B cell (primary cell): ENCODE measurements at regions of chrX and their contacts with region 1.

Region 1: DNA sequence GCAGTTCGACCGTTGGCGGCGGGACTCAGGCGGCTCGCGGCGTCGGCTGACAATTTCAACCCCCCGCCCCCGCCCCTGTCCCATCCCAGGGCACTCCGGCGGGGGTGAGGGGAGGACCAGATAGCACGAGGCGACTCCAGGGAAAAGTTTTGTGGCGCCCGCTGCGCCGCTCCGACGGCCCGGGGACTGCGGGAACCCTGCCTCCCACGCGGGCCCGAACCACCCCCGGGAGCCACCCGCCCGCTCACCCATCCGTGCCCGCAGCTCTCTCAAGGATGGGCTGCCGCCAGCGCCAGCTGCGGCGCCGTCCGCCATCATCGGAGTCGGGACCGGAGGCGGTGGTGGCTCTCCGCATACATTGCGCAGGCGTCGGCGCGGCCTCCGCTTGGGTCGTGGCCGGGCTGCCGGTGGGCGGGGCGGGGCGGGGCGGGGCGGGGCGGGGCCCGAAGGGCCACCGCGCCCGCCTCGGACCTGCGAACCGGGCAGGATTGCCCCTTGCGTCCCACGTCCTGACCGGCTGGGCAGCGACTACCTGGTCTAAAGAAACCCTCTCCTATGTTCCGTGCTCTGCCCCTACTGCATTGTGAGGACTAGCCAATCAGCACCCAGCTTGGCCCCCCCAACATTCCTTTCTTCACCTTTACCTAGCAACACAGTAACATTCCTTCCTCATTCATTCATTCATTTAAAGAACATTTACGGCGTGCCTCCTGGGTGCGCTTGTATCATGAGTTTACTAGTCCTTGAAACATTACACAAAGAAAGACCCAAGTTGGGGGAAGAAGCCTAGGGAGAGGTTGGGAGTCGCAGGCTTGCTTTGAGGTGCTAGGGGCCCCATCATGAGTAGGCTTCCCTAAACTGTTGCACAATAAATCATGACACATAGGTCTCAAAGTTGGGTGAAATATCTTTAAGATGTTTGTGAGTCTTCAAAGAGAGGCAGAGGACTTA is at the start of gene MAP7D3:
- DNase-seq: peak; percentile 81
- ATAC-seq: peak; percentile 90
- H3K4me3 ChIP-seq: peak within 1 kb of the TSS; percentile 38 to 75 (median 67)
- H3K4me3 Mint-ChIP-seq: peak within 1 kb of the TSS; percentile 88
- H3K27ac ChIP-seq: peak within 1 kb of the TSS; percentile 47 to 70
- H3K27ac Mint-ChIP-seq: peak within 1 kb of the TSS; percentile 89
- H3K4me1 ChIP-seq: peaks cover 5 to 11% of the 10 kb centered on the region in 2 donors
- H3K4me1 Mint-ChIP-seq: peaks cover 13% of the 10 kb centered on the region
- H3K27me3 ChIP-seq: no peaks in the 10 kb centered on the region
- H3K27me3 Mint-ChIP-seq: no peaks in the 10 kb centered on the region
- CTCF ChIP-seq: no peak
- total RNA-seq, gene MAP7D3: 11.5 and 13.0 TPM in 2 replicates

Region 2: DNA sequence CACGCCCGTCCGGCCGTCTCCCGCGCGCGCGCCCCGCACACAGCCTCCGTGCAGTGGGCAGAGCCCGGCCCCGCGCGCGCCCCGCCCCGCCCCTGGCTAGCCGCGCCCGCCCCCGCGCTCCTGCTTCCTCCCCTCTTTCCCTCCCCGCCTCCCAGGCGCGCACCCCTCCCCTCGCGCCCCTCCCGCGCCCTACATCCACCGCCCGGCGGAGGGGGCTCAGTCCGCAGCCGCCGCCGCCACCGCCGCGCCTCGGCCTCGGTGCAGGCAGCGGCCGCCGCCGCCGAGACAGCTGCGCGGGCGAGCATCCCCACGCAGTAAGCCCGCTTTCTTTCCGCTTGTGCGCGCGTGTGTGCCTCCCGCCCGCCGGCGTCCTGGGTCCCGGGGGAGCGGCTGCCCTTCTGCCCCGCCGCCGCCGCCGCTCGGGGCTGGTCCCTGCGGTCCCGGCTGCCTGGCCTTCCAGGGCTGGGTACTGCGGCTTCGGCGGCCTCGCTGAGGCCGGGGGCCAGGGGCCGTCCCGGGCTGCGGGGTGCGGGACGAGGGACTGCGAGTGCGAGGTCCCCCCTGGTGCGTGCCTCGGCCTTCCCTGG is 103.9 kb before region 1 on chrX and contains the start of gene FHL1:
- CTCF ChIA-PET with region 1: no interaction called
- POLR2A ChIA-PET with region 1: no interaction called
- intact Hi-C with region 1: loop called (anchors 5 kb)
- DNase-seq: peak; percentile 52
- ATAC-seq: peak; percentile 83
- H3K4me3 ChIP-seq: peak within 1 kb of the TSS; percentile 16 to 66 (median 56)
- H3K4me3 Mint-ChIP-seq: peak within 1 kb of the TSS; percentile 85
- H3K27ac ChIP-seq: no peak within 1 kb of the TSS
- H3K27ac Mint-ChIP-seq: peak within 1 kb of the TSS; percentile 59
- H3K4me1 ChIP-seq: peaks cover 17 to 18% of the 10 kb centered on the region in 2 donors
- H3K4me1 Mint-ChIP-seq: peaks cover 26% of the 10 kb centered on the region
- H3K27me3 ChIP-seq: peaks cover 0 to 6% (median 0%) of the 10 kb centered on the region in 4 experiments
- H3K27me3 Mint-ChIP-seq: no peaks in the 10 kb centered on the region
- CTCF ChIP-seq: no peak
- total RNA-seq, gene FHL1: 5.6 and 8.0 TPM in 2 replicates

Region 3: GRCh38 chrX:136209016-136209738 is 42.1 kb before region 1 on chrX:
- CTCF ChIA-PET with region 1: no interaction called
- POLR2A ChIA-PET with region 1: no interaction called
- intact Hi-C with region 1: no loop called
- DNase-seq: peak; percentile 40
- ATAC-seq: peak; percentile 16
- H3K4me3 ChIP-seq: no peak overlapping the region
- H3K4me3 Mint-ChIP-seq: peak overlapping the region; percentile 34
- H3K27ac ChIP-seq: no peak overlapping the region
- H3K27ac Mint-ChIP-seq: no peak overlapping the region
- H3K4me1 ChIP-seq: peaks cover 35 to 48% of the 10 kb centered on the region in 2 donors
- H3K4me1 Mint-ChIP-seq: peaks cover 43% of the 10 kb centered on the region
- H3K27me3 ChIP-seq: no peaks in the 10 kb centered on the region
- H3K27me3 Mint-ChIP-seq: no peaks in the 10 kb centered on the region
- CTCF ChIP-seq: no peak

Region 4: GRCh38 chrX:136227948-136228838 is 23.1 kb before region 1 on chrX:
- CTCF ChIA-PET with region 1: no interaction called
- POLR2A ChIA-PET with region 1: no interaction called
- intact Hi-C with region 1: loop called (anchors 2 kb)
- DNase-seq: peak; percentile 29
- ATAC-seq: peak; percentile 41
- H3K4me3 ChIP-seq: peak overlapping the region in 4 of 5 experiments; percentile 3 to 42 (median 21)
- H3K4me3 Mint-ChIP-seq: peak overlapping the region; percentile 67
- H3K27ac ChIP-seq: peak overlapping the region; percentile 62 to 65
- H3K27ac Mint-ChIP-seq: peak overlapping the region; percentile 89
- H3K4me1 ChIP-seq: peaks cover 14 to 16% of the 10 kb centered on the region in 2 donors
- H3K4me1 Mint-ChIP-seq: peaks cover 36% of the 10 kb centered on the region
- H3K27me3 ChIP-seq: no peaks in the 10 kb centered on the region
- H3K27me3 Mint-ChIP-seq: no peaks in the 10 kb centered on the region
- CTCF ChIP-seq: no peak

Region 5: DNA sequence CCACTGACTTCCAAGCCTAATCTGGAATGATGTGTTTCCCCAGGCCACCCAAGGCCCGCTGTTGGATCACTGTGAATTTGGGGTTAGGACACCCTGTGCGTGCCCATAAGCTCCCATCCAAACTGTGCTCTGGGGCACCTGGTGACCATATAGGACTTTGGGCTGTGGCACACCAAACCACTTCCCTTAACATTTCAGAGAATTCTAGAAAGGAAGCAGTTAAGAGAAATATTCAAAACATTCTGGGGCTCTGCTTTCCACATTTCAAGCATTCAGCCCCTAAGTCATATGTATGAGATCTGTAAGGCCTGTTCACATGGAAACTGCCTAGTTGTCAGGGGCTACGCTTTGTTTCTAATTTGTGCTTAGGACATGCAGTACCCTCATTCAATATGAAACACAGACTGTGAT is 295.1 kb after region 1 on chrX:
- CTCF ChIA-PET with region 1: no interaction called
- POLR2A ChIA-PET with region 1: no interaction called
- intact Hi-C with region 1: no loop called
- DNase-seq: no peak
- ATAC-seq: no peak
- H3K4me3 ChIP-seq: no peak overlapping the region
- H3K4me3 Mint-ChIP-seq: no peak overlapping the region
- H3K27ac ChIP-seq: no peak overlapping the region
- H3K27ac Mint-ChIP-seq: no peak overlapping the region
- H3K4me1 ChIP-seq: no peaks in the 10 kb centered on the region
- H3K4me1 Mint-ChIP-seq: no peaks in the 10 kb centered on the region
- H3K27me3 ChIP-seq: no peaks in the 10 kb centered on the region
- H3K27me3 Mint-ChIP-seq: no peaks in the 10 kb centered on the region
- CTCF ChIP-seq: no peak